ENCODE measurements at regions of chr2 and their contacts with region 1.

Region 1: GRCh38 chr2:48107326-48107925 is 201.1 kb upstream of the FBXO11 start:
- DNase-seq: no peak
- H3K4me3 ChIP-seq: no peak overlapping the region
- H3K27ac ChIP-seq: no peak overlapping the region
- H3K4me1 ChIP-seq: peaks cover 7% of the 10 kb centered on the region
- CTCF ChIP-seq: no peak

Region 2: GRCh38 chr2:47339745-47340541 is 767.5 kb before region 1 on chr2:
- CTCF ChIA-PET with region 1: no interaction called
- POLR2A ChIA-PET with region 1: no interaction called
- intact Hi-C with region 1: loop called (anchors 10 kb)
- DNase-seq: no peak
- H3K4me3 ChIP-seq: no peak overlapping the region
- H3K27ac ChIP-seq: no peak overlapping the region
- H3K4me1 ChIP-seq: peaks cover 18% of the 10 kb centered on the region
- CTCF ChIP-seq: no peak

Region 3: GRCh38 chr2:47811668-47812067 is 295.8 kb before region 1 on chr2:
- CTCF ChIA-PET with region 1: no interaction called
- POLR2A ChIA-PET with region 1: no interaction called
- intact Hi-C with region 1: loop called (anchors 5 kb)
- DNase-seq: no peak
- H3K4me3 ChIP-seq: no peak overlapping the region
- H3K27ac ChIP-seq: peak overlapping the region; percentile 0
- H3K4me1 ChIP-seq: peaks cover 5% of the 10 kb centered on the region
- CTCF ChIP-seq: no peak

Region 4: GRCh38 chr2:47833516-47833968 is 273.9 kb before region 1 on chr2:
- CTCF ChIA-PET with region 1: no interaction called
- POLR2A ChIA-PET with region 1: no interaction called
- intact Hi-C with region 1: loop called (anchors 5 kb)
- DNase-seq: no peak
- H3K4me3 ChIP-seq: no peak overlapping the region
- H3K27ac ChIP-seq: no peak overlapping the region
- H3K4me1 ChIP-seq: no peaks in the 10 kb centered on the region
- CTCF ChIP-seq: no peak

Region 5: GRCh38 chr2:47862949-47863348 is 244.5 kb before region 1 on chr2:
- CTCF ChIA-PET with region 1: no interaction called
- POLR2A ChIA-PET with region 1: interaction called, 5 read pairs
- intact Hi-C with region 1: loop called (anchors 2 kb)
- DNase-seq: no peak
- H3K4me3 ChIP-seq: no peak overlapping the region
- H3K27ac ChIP-seq: no peak overlapping the region
- H3K4me1 ChIP-seq: peaks cover 30% of the 10 kb centered on the region
- CTCF ChIP-seq: no peak

Region 6: GRCh38 chr2:47906157-47907038 is 201.0 kb before region 1 on chr2 and contains the start of gene FBXO11:
- CTCF ChIA-PET with region 1: no interaction called
- POLR2A ChIA-PET with region 1: no interaction called
- intact Hi-C with region 1: loop called (anchors 5 kb)
- DNase-seq: peak; percentile 99
- H3K4me3 ChIP-seq: peak within 1 kb of the TSS; percentile 93
- H3K27ac ChIP-seq: peak within 1 kb of the TSS; percentile 95
- H3K4me1 ChIP-seq: peaks cover 31% of the 10 kb centered on the region
- CTCF ChIP-seq: no peak; the same call in 1 of the 2 replicates
- total RNA-seq, gene FBXO11: 24.7 and 31.9 TPM in 2 replicates